Endothelial cell of umbilical vein (primary cell): ENCODE measurements at regions of chr13 and their contacts with region 1.

Region 1: GRCh38 chr13:71240911-71241310 is 626.1 kb downstream of the DACH1 start:
- DNase-seq: peak; percentile 68
- H3K4me3 ChIP-seq: no peak overlapping the region
- H3K27ac ChIP-seq: no peak overlapping the region
- H3K4me1 ChIP-seq: peaks cover 14% of the 10 kb centered on the region
- H3K27me3 ChIP-seq: no peaks in the 10 kb centered on the region
- CTCF ChIP-seq: peak; percentile 36 to 56
- POLR2A ChIP-seq: no peak

Region 2: DNA sequence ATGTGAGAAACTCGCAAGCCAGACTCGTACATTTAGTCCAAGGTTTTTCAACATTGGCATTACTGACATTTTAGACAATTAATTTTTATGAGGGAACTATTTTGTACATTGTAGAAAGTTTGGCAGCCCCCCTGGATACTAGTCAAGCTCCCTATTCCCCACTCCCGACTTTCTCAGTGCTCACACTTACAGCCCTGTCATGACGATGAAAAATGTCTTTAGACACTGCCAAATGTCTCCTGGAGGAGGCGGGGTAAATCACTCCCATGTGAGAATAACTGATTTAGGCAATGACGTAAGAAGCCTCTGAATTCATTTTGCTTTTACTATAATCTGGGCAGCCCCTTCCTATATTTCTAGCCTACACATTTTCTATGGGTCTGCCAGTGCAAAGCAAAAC is 596.9 kb before region 1 on chr13:
- CTCF ChIA-PET with region 1: no interaction called
- POLR2A ChIA-PET with region 1: no interaction called
- dilution Hi-C with region 1: no loop called
- intact Hi-C with region 1: no loop called
- DNase-seq: no peak
- H3K4me3 ChIP-seq: no peak overlapping the region
- H3K27ac ChIP-seq: no peak overlapping the region
- H3K4me1 ChIP-seq: no peaks in the 10 kb centered on the region
- H3K27me3 ChIP-seq: no peaks in the 10 kb centered on the region
- CTCF ChIP-seq: no peak
- POLR2A ChIP-seq: no peak

Region 3: DNA sequence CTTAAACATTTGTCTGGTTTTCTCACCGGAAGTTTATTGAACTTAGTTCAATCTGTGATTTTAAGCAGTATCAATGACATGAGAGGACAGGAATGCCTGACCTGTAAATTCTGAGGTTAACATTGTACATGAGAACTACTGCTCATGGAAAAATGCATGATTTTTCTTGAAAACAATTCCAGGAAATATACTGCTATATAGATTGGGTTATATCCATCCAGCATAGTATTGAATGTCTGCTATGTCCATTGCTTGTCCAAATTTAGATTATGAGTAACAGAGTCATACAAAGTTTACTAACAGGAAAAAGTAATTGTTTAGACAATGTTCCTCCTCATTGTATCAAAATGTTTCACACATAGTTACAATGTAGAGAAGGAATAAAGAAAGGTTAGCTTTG is 19.3 kb after region 1 on chr13:
- CTCF ChIA-PET with region 1: interaction called, 3 read pairs
- POLR2A ChIA-PET with region 1: no interaction called
- dilution Hi-C with region 1: no loop called
- intact Hi-C with region 1: loop called (anchors 1 kb)
- DNase-seq: peak; percentile 78
- H3K4me3 ChIP-seq: no peak overlapping the region
- H3K27ac ChIP-seq: peak overlapping the region; percentile 21
- H3K4me1 ChIP-seq: peaks cover 6% of the 10 kb centered on the region
- H3K27me3 ChIP-seq: no peaks in the 10 kb centered on the region
- CTCF ChIP-seq: no peak
- POLR2A ChIP-seq: no peak

Region 4: GRCh38 chr13:71395053-71395452 is 154.1 kb after region 1 on chr13:
- CTCF ChIA-PET with region 1: no interaction called
- POLR2A ChIA-PET with region 1: no interaction called
- dilution Hi-C with region 1: no loop called
- intact Hi-C with region 1: no loop called
- DNase-seq: no peak
- H3K4me3 ChIP-seq: no peak overlapping the region
- H3K27ac ChIP-seq: no peak overlapping the region
- H3K4me1 ChIP-seq: no peaks in the 10 kb centered on the region
- H3K27me3 ChIP-seq: no peaks in the 10 kb centered on the region
- CTCF ChIP-seq: no peak
- POLR2A ChIP-seq: no peak

Region 5: DNA sequence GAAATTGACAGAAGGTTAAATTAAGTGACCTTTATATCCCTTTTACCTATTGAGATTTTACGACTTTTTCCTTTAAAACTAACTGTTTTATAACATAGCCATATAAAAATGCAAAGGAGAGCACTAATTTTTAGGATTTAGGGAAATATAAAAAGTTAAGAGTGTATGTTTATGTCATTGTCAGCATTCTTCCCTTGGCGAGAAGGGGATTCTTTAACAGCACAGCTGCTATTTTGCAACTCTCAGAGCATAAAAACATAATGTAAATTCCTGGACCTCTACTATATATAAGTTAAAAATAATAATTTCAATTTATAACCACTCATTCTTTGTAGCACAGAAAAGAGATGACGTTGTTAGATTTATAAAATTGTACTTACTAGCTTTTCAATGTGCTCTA is 262.9 kb after region 1 on chr13:
- CTCF ChIA-PET with region 1: no interaction called
- POLR2A ChIA-PET with region 1: no interaction called
- dilution Hi-C with region 1: no loop called
- intact Hi-C with region 1: no loop called
- DNase-seq: no peak
- H3K4me3 ChIP-seq: no peak overlapping the region
- H3K27ac ChIP-seq: no peak overlapping the region
- H3K4me1 ChIP-seq: peaks cover 19% of the 10 kb centered on the region
- H3K27me3 ChIP-seq: no peaks in the 10 kb centered on the region
- CTCF ChIP-seq: no peak
- POLR2A ChIP-seq: no peak

Region 6: DNA sequence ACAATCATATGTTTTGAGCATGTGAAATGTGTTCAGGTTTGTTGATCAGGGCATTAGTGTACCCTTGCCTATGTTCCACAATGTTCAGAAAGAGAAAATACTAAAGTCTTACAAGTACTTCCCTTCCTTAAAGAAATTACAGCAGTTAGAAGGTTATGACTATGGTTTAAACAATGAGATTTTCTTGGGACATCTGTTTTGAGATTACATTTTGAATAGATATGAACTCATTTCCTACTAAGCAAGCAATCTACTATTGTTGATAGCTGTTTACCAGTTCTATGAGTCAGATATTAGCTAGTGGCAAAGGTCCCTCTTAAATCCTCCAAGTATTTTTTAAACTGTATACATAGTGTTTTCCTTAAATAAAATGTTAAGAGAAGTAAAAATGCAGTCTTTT is 384.8 kb after region 1 on chr13:
- CTCF ChIA-PET with region 1: interaction called, 4 read pairs
- POLR2A ChIA-PET with region 1: no interaction called
- dilution Hi-C with region 1: no loop called
- intact Hi-C with region 1: loop called (anchors 5 kb)
- DNase-seq: peak; percentile 93
- H3K4me3 ChIP-seq: peak overlapping the region in 1 of 3 experiments; percentile 45
- H3K27ac ChIP-seq: peak overlapping the region; percentile 83
- H3K4me1 ChIP-seq: peaks cover 56% of the 10 kb centered on the region
- H3K27me3 ChIP-seq: no peaks in the 10 kb centered on the region
- CTCF ChIP-seq: no peak
- POLR2A ChIP-seq: no peak

Region 7: DNA sequence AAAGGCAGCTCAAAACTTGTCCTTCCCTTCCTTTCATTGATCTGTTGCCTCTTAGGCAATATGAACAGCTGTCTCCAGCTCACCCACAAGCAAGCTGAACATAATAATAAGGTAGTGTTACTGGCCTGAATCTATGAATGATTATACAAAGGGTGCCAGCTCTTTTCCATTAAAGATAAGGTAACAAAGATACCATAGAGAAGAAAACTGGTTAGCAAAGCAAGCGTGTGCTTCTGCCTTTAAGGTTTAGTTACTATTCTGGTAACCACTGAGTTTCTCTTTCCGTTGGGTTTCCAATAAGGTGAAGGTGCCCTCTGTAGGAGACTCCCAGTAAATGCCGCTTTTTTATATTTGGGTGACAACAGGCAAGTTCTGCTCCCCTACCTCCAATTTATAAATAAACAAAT is 638.2 kb after region 1 on chr13:
- CTCF ChIA-PET with region 1: interaction called, 71 read pairs
- POLR2A ChIA-PET with region 1: no interaction called
- dilution Hi-C with region 1: no loop called
- intact Hi-C with region 1: loop called (anchors 1 kb)
- DNase-seq: peak; percentile 75
- H3K4me3 ChIP-seq: no peak overlapping the region
- H3K27ac ChIP-seq: no peak overlapping the region
- H3K4me1 ChIP-seq: no peaks in the 10 kb centered on the region
- H3K27me3 ChIP-seq: no peaks in the 10 kb centered on the region
- CTCF ChIP-seq: peak; percentile 39 to 61
- POLR2A ChIP-seq: no peak